GM13977 (cell line): ENCODE measurements at regions of chr2 and their contacts with region 1.

Region 1: DNA sequence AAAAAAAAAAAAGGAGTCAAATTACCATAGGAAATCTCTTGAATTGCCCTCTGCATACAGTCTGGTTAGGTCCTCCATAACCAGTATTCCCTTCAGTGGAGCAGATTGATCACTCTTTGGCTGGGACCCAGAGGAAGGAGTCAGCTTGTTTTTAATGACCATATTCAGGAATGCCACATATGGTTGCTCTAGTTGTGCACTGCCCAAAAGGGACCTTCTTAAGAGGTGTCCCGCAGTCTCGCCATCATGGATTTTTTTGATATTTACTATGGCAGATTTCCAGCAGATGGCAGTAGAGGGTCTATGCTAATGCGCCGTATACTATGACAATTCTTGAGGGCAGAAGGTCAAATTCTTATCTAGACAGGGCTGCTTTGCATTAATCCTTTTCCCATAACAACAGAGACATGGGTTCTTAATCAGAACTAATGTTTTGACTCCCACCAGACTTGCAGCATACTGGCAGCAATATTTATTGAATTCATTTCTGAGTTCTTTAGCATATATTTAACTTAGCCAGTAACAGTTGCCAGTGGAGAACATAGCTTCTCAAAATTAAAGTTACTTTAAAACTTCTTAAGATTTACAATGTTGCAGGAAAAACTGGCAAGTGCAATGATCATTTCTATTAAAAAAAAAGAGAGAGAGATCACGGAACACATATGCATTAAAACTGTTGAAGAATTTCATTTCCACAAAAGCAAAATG is 31.8 kb upstream of the INPP4A start:
- DNase-seq: peak; percentile 60
- CTCF ChIP-seq: peak; percentile 68

Region 2: DNA sequence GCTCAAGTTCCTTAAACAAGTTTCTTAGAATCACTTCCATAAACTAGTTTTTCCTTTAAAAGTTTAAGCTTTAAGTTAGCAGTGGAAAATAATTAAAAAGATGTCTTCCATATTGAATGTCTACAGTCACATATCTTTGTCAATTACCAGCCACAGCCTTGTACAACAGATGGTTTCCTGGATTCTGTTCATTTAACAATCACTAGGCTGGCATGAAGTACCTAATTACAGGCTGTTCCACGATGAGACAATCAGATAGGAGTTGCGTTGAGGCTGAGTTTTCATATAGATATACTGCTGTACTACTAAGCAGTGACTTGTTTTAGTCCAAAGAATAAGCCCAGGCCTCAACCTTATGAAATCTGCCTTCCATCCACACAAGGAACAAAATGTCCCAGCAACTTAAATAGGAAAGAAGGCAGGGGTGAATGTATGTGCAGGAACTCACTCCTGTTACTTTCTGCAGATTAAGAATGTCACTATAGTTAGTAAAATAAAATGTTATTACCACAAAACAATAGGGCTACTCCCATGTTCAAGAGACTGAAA is 568.5 kb before region 1 on chr2:
- in situ Hi-C with region 1: no loop called
- DNase-seq: no peak
- CTCF ChIP-seq: no peak

Region 3: DNA sequence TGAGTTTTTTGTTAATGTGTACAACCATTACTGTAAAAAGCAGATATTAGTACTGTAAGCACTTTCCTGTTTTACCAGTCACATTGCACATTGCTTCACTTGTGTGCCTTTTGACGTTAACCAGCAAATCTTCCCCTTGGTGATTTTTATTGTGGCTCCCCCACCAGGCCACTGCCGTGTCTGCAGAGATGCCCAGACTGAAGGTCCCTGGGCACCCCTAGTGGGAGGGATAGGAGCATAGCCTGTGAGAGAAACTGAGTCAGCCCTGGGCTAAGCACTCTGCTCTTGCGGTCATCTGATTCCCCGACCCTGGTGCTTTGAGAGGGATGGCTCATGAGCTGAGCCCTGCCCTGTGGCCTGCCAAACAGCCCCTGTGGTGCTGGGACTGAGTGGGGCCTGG is 105.2 kb after region 1 on chr2:
- in situ Hi-C with region 1: loop called (anchors 10 kb)
- DNase-seq: peak; percentile 61
- CTCF ChIP-seq: peak; percentile 65

Region 4: DNA sequence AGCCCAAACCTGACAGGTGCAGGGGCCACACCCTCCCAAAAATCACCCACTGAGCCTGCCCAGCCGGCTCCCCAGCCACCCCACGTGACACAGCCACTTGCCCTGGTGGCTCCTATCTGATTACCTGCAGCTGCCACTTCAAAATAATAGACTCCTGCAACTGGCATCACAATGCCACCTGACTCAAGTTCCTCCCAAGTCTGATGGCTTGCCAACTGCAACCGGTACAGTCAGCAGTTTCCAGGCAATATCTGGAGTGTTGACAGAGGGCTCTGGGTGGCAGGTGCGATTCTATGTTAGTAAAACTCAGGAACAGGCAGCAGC is 457.0 kb after region 1 on chr2:
- in situ Hi-C with region 1: no loop called
- DNase-seq: peak; percentile 12
- CTCF ChIP-seq: no peak